PC-9 (cell line): ENCODE measurements at regions of chr4 and their contacts with region 1.

Region 1: DNA sequence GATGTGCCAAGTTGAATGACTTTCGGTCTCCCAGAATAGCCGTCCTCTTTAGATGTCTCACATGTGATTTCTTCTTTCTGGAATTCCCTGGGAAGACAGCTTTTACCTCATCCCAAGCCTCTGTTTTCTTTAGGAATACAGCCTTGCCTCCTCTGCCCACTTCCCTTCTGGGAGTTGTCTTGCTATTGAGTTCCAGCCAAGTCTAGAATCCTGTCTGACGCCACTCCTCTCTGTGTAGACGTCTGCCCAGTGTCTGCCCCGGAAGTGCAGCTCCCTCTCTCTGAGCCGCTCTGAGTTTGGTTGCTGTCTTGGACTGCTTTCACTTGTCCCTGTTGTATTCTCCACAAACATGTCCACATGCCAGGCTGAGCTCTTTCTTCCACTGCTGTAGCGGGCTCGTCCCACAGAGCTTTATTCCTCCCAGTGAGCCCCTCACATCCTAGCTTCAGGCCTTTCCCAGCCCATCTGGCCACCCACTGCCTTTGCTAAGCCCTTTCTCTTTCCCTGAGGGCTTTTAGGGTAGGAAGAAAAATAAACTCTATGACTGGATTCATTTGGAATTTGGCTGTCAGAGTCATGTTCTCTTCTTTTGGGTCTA is 9.0 kb upstream of the IGFBP7 start:
- DNase-seq: peak in 1 of 2 experiments; percentile 42
- H3K4me3 ChIP-seq: no peak overlapping the region
- H3K27ac ChIP-seq: no peak overlapping the region
- H3K4me1 ChIP-seq: no peaks in the 10 kb centered on the region
- H3K27me3 ChIP-seq: no peaks in the 10 kb centered on the region
- CTCF ChIP-seq: no peak

Region 2: GRCh38 chr4:57131849-57132742 is 12.9 kb after region 1 on chr4:
- CTCF ChIA-PET with region 1: no interaction called
- POLR2A ChIA-PET with region 1: no interaction called
- intact Hi-C with region 1: loop called (anchors 2 kb)
- DNase-seq: peak in 1 of 2 experiments; percentile 55
- H3K4me3 ChIP-seq: no peak overlapping the region
- H3K27ac ChIP-seq: no peak overlapping the region
- H3K4me1 ChIP-seq: no peaks in the 10 kb centered on the region
- H3K27me3 ChIP-seq: no peaks in the 10 kb centered on the region
- CTCF ChIP-seq: no peak

Region 3: GRCh38 chr4:57163530-57164459 is 44.6 kb after region 1 on chr4:
- CTCF ChIA-PET with region 1: no interaction called
- POLR2A ChIA-PET with region 1: no interaction called
- intact Hi-C with region 1: no loop called
- DNase-seq: peak; percentile 39 to 69
- H3K4me3 ChIP-seq: peak overlapping the region; percentile 66
- H3K27ac ChIP-seq: no peak overlapping the region
- H3K4me1 ChIP-seq: no peaks in the 10 kb centered on the region; the same call in 1 of the 2 replicates
- H3K27me3 ChIP-seq: no peaks in the 10 kb centered on the region
- CTCF ChIP-seq: peak; percentile 80

Region 4: DNA sequence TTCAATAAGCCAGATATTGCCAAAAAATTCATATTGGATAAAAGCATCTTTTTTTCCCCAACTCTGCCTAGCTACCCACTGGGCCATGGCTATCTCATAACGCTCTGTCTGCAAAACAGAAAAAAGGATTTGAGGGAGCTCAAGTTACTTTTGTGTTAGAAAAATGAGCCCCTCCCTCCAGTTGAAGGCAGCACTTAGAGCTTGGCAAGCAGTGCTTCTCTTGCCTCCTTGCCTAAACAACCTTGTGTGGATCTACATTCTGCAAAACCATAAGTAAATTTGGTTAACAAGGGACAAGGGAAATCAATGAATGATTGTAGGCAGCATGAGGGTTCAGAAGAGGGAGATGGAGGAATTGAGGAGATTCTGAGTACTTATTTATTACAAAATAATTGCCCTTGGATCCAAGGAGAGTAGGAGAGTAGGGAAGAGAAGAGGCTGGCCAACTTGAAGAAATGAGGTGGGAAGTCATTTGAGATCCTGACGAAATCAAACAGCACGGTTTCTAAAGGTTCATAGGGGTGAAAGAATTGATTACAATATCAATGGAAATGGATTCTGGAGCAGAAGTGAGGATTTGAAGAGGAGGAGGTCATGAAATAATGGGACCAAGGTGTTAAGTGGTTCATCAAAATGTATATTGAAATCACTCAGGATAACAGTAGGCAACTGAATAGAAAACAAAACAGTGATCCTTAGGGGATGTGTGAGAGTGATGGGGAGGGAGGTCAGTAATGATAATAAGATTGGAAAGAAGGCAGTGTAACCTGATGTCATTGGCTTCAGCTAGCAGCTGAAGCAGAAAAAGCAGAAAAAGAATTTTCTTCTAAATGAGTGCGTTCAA is 425.9 kb after region 1 on chr4:
- CTCF ChIA-PET with region 1: no interaction called
- POLR2A ChIA-PET with region 1: no interaction called
- intact Hi-C with region 1: no loop called
- DNase-seq: no peak
- H3K4me3 ChIP-seq: no peak overlapping the region
- H3K27ac ChIP-seq: no peak overlapping the region
- H3K4me1 ChIP-seq: no peaks in the 10 kb centered on the region
- H3K27me3 ChIP-seq: no peaks in the 10 kb centered on the region
- CTCF ChIP-seq: no peak